Sigmoid colon (tissue), 7 donors: ENCODE measurements at regions of chr2 and their contacts with region 1.

Region 1: GRCh38 chr2:218292048-218293014 is at the start of gene TMBIM1:
- DNase-seq: peak; percentile 91
- H3K4me3 ChIP-seq: peak within 1 kb of the TSS; percentile 67 to 97 (median 86)
- H3K27ac ChIP-seq: peak within 1 kb of the TSS; percentile 91 to 99 (median 96)
- H3K4me1 ChIP-seq: peaks cover 0 to 50% (median 47%) of the 10 kb centered on the region in 4 donors
- H3K27me3 ChIP-seq: no peaks in the 10 kb centered on the region
- CTCF ChIP-seq: peak in 2 of 4 experiments; percentile 30 to 93
- EP300 ChIP-seq: no peak
- POLR2A ChIP-seq: peak; percentile 66 to 82
- total RNA-seq, gene TMBIM1: 116 to 157 (median 146) TPM

Region 2: GRCh38 chr2:217186668-217187159 is 1105.6 kb before region 1 on chr2:
- intact Hi-C with region 1: no loop called
- DNase-seq: peak; percentile 89
- H3K4me3 ChIP-seq: no peak overlapping the region
- H3K27ac ChIP-seq: peak overlapping the region; percentile 47 to 67 (median 52)
- H3K4me1 ChIP-seq: peaks cover 0 to 20% (median 3%) of the 10 kb centered on the region in 4 donors
- H3K27me3 ChIP-seq: no peaks in the 10 kb centered on the region
- CTCF ChIP-seq: no peak
- EP300 ChIP-seq: peak in 1 of 4 donors; percentile 10
- POLR2A ChIP-seq: no peak

Region 3: GRCh38 chr2:218367415-218368153 is 75.3 kb after region 1 on chr2:
- intact Hi-C with region 1: loop called (anchors 5 kb)
- DNase-seq: peak; percentile 94
- H3K4me3 ChIP-seq: peak overlapping the region; percentile 39 to 55 (median 49)
- H3K27ac ChIP-seq: peak overlapping the region; percentile 77 to 87 (median 82)
- H3K4me1 ChIP-seq: peaks cover 0 to 30% (median 21%) of the 10 kb centered on the region in 4 donors
- H3K27me3 ChIP-seq: no peaks in the 10 kb centered on the region
- CTCF ChIP-seq: no peak
- EP300 ChIP-seq: peak in 1 of 4 donors; percentile 41
- POLR2A ChIP-seq: peak; percentile 81 to 89

Region 4: GRCh38 chr2:218381916-218382366 is 89.6 kb after region 1 on chr2 and contains the start of gene SLC11A1:
- intact Hi-C with region 1: no loop called
- DNase-seq: peak; percentile 87
- H3K4me3 ChIP-seq: peak within 1 kb of the TSS in 3 of 4 donors; percentile 9 to 37 (median 30)
- H3K27ac ChIP-seq: peak within 1 kb of the TSS in 3 of 4 donors; percentile 20 to 57 (median 47)
- H3K4me1 ChIP-seq: peaks cover 0 to 3% (median 0%) of the 10 kb centered on the region in 4 donors
- H3K27me3 ChIP-seq: no peaks in the 10 kb centered on the region
- CTCF ChIP-seq: no peak
- EP300 ChIP-seq: peak in 3 of 4 donors; percentile 12 to 67 (median 17)
- POLR2A ChIP-seq: peak in 1 of 2 donors; percentile 25
- total RNA-seq, gene SLC11A1: 13.8 to 19.0 (median 16.9) TPM

Region 5: GRCh38 chr2:218395797-218396687 is 103.7 kb after region 1 on chr2:
- intact Hi-C with region 1: loop called (anchors 2 kb)
- DNase-seq: peak; percentile 98
- H3K4me3 ChIP-seq: peak overlapping the region; percentile 92 to 100 (median 98)
- H3K27ac ChIP-seq: peak overlapping the region; percentile 97 to 100 (median 100)
- H3K4me1 ChIP-seq: peaks cover 0 to 38% (median 31%) of the 10 kb centered on the region in 4 donors
- H3K27me3 ChIP-seq: no peaks in the 10 kb centered on the region
- CTCF ChIP-seq: peak; percentile 89 to 97 (median 94)
- EP300 ChIP-seq: peak in 2 of 4 donors; percentile 10 to 16
- POLR2A ChIP-seq: peak; percentile 54

Region 6: DNA sequence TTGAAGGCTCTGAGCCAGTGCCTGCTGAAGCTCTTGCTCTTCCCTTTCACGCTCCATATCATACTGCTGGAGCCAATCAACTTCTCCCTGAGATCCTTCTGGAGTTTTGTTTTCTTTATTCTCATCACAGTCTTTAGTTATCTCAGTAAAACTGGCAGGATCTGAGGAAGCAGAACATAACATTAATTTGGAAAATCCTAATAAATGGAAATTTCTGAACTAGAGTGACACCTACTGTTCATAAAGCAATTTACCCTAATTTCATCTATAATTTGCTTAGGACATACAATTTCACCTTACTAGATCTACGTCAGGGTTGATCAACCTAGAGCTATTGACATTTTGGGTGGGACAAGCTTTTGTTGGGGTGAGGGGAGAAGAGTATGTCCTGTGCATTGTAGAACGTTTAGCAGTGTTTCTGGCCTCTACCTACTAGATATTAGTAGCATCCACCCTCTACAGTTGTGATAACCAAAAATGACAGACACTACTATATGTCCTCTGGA is 173.7 kb after region 1 on chr2:
- intact Hi-C with region 1: loop called (anchors 5 kb)
- DNase-seq: no peak
- H3K4me3 ChIP-seq: no peak overlapping the region
- H3K27ac ChIP-seq: no peak overlapping the region
- H3K4me1 ChIP-seq: no peaks in the 10 kb centered on the region
- H3K27me3 ChIP-seq: no peaks in the 10 kb centered on the region
- CTCF ChIP-seq: peak; percentile 32 to 55 (median 44)
- EP300 ChIP-seq: no peak
- POLR2A ChIP-seq: no peak

Region 7: GRCh38 chr2:218568190-218569037 is 276.1 kb after region 1 on chr2 and contains the starts of genes CNOT9 and USP37:
- intact Hi-C with region 1: loop called (anchors 5 kb)
- DNase-seq: peak; percentile 100
- H3K4me3 ChIP-seq: peak within 1 kb of the TSS; percentile 60 to 76 (median 70)
- H3K27ac ChIP-seq: peak within 1 kb of the TSS; percentile 91 to 96 (median 94)
- H3K4me1 ChIP-seq: peaks cover 0 to 40% (median 36%) of the 10 kb centered on the region in 4 donors
- H3K27me3 ChIP-seq: no peaks in the 10 kb centered on the region
- CTCF ChIP-seq: no peak
- EP300 ChIP-seq: peak in 2 of 4 donors; percentile 51 to 90
- POLR2A ChIP-seq: peak; percentile 65 to 67
- total RNA-seq, gene CNOT9: 25.0 to 36.2 (median 28.5) TPM
- total RNA-seq, gene USP37: 6.6 to 11.4 (median 10.5) TPM

Region 8: DNA sequence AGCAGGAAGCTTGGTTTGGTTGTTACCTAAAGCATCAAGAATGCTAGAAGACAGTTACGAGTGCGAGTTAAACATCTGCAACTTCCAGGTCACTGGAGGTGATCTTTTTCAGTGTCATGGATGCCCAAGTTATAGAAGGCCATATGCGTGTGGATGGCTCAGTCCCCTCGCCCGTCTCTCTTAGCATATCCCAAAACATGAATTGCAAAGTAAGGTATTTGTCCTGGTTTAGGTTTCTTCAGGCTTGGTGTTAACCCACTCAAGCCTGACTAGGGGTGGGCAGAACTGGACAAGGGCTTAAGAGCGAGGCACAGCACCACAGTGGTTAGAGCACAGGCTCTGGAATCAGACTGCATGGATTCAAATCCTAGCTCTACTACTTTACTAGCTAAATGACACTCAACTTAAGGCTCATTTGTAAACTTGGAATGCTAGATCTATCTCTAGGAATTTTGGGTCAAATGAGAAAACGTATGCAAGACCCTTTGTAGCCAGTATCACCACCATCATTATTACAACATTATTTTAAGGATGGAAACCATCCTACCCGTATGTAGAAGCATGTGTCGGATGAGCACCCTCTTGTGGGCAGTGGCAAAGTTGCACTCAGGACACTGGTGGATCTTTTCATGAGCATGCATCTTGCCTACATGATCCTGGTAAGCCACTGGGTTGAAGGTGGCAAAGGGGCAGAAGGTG is 355.9 kb after region 1 on chr2:
- intact Hi-C with region 1: loop called (anchors 10 kb)
- DNase-seq: peak; percentile 17
- H3K4me3 ChIP-seq: no peak overlapping the region
- H3K27ac ChIP-seq: no peak overlapping the region
- H3K4me1 ChIP-seq: no peaks in the 10 kb centered on the region
- H3K27me3 ChIP-seq: no peaks in the 10 kb centered on the region
- CTCF ChIP-seq: peak; percentile 48 to 83 (median 76)
- EP300 ChIP-seq: no peak
- POLR2A ChIP-seq: no peak